Activated CD4-positive, alpha-beta memory T cell treated with anti-CD3 and anti-CD28 coated beads for 36 hours (primary cell): ENCODE measurements at regions of chr19 and their contacts with region 1.

Region 1: GRCh38 chr19:40640744-40641143 is 39.6 kb downstream of the LTBP4 start:
- DNase-seq: no peak
- H3K4me3 Mint-ChIP-seq: no peak overlapping the region
- H3K27ac Mint-ChIP-seq: no peak overlapping the region
- H3K4me1 Mint-ChIP-seq: no peaks in the 10 kb centered on the region
- H3K27me3 Mint-ChIP-seq: peaks cover 1% of the 10 kb centered on the region

Region 2: DNA sequence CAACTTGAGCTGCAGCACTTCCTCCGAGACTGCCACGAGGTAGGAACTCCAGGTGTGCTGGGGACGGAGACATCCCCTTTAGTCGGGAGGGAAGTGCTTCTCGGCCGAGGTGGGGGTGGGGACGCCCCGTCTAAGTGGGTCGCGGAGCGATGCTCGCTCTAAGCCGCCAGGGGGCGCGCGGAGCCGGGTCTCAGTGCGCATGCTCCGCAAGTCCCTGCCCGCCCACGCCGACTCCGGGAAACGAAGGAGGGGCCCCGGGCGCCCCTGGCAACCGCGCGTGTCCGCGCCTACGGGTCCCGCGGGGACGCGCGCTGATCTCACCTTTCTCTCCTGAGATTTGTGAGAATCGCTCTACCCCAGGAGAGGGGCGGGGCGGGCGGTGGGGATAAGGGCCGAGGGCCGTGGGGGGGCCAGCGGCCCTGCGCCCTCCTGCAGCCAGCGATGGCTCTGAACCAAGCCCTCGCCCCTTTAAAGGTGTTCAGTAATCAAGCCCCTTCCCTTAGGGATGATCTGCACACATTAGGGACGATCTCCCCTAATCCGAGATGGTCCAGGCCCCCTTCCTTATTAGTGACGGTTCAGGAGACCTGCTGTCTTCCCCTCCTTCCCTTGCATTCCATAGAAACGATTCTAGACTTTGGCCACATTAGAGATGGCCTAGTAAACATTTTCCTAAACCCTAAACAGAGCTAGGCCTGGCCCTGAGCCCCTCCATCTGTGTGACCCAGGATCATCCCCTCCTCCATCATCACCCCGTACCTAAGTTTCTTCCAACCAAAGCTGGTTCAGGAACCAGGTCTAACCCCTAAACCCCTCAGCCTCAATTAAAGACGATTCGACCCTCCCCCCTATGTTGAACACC is 111.4 kb before region 1 on chr19:
- CTCF ChIA-PET with region 1: interaction called, 19 read pairs
- POLR2A ChIA-PET with region 1: no interaction called
- intact Hi-C with region 1: loop called (anchors 2 kb)
- DNase-seq: peak; percentile 94
- H3K4me3 Mint-ChIP-seq: peak overlapping the region; percentile 51
- H3K27ac Mint-ChIP-seq: peak overlapping the region; percentile 4
- H3K4me1 Mint-ChIP-seq: peaks cover 11% of the 10 kb centered on the region
- H3K27me3 Mint-ChIP-seq: peaks cover 18% of the 10 kb centered on the region

Region 3: GRCh38 chr19:40549007-40549708 is 91.6 kb before region 1 on chr19:
- CTCF ChIA-PET with region 1: interaction called, 36 read pairs
- POLR2A ChIA-PET with region 1: no interaction called
- intact Hi-C with region 1: no loop called
- DNase-seq: peak; percentile 82
- H3K4me3 Mint-ChIP-seq: no peak overlapping the region
- H3K27ac Mint-ChIP-seq: no peak overlapping the region
- H3K4me1 Mint-ChIP-seq: peaks cover 7% of the 10 kb centered on the region
- H3K27me3 Mint-ChIP-seq: peaks cover 47% of the 10 kb centered on the region

Region 4: GRCh38 chr19:40609561-40610395 is 31.0 kb before region 1 on chr19:
- CTCF ChIA-PET with region 1: interaction called, 41 read pairs
- POLR2A ChIA-PET with region 1: no interaction called
- intact Hi-C with region 1: loop called (anchors 2 kb)
- DNase-seq: peak; percentile 97
- H3K4me3 Mint-ChIP-seq: peak overlapping the region; percentile 72
- H3K27ac Mint-ChIP-seq: peak overlapping the region; percentile 84
- H3K4me1 Mint-ChIP-seq: peaks cover 61% of the 10 kb centered on the region
- H3K27me3 Mint-ChIP-seq: no peaks in the 10 kb centered on the region

Region 5: DNA sequence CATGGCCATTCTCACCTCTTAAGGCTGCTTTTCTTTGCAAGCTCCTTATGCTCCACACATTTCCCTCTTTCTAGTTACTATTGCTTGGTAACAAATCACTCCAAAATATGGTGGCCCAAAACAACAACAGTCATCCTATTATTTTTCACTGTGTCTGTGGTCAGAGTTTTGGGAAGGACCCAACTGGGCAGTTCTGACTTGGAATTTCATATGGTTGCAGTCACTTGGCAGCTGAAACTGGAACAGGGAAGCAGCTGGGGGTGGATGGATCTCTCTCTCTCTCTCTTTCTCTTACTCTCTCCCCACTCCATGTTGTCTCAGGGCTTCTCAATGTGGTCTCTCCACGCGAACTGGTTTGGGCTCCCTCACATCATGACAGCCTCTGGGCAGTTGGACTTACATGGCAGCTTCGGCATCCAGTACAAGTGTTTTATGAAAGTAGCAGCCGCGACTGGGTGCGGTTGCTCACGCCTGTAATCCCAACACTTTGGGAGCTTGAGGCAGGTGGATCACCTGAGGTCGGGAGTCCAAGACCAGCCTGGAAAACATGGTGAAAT is 10.1 kb after region 1 on chr19:
- CTCF ChIA-PET with region 1: interaction called, 28 read pairs
- POLR2A ChIA-PET with region 1: no interaction called
- intact Hi-C with region 1: no loop called
- DNase-seq: no peak
- H3K4me3 Mint-ChIP-seq: no peak overlapping the region
- H3K27ac Mint-ChIP-seq: no peak overlapping the region
- H3K4me1 Mint-ChIP-seq: no peaks in the 10 kb centered on the region
- H3K27me3 Mint-ChIP-seq: peaks cover 8% of the 10 kb centered on the region